Heart left ventricle (tissue), 16 donors: ENCODE measurements at regions of chr20 and their contacts with region 1.

Region 1: DNA sequence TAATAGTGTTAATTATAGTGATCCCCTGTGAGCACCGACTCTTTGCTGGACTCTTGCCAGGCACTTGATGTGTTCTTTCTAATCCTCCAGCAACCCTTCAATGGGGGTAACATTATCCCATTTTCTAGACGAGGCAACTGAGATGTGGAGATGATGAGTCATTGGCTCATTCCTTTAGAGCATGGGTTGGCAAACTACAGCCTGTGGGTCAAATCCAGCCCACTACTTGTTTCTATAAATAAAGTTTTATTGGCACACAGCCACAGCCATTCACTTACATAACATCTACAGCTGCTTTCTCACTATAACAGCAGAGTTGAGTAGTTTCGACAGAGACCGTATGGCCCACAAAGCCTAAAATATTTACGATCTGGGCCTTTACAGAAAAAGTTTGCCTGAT is 249.5 kb upstream of the KCNG1 start:
- DNase-seq: no peak
- ATAC-seq: no peak
- H3K4me3 ChIP-seq: no peak overlapping the region
- H3K27ac ChIP-seq: no peak overlapping the region
- H3K4me1 ChIP-seq: peaks cover 0 to 7% (median 0%) of the 10 kb centered on the region in 12 donors
- H3K27me3 ChIP-seq: peaks cover 1 to 43% (median 10%) of the 10 kb centered on the region in 9 donors
- CTCF ChIP-seq: no peak
- POLR2A ChIP-seq: no peak

Region 2: DNA sequence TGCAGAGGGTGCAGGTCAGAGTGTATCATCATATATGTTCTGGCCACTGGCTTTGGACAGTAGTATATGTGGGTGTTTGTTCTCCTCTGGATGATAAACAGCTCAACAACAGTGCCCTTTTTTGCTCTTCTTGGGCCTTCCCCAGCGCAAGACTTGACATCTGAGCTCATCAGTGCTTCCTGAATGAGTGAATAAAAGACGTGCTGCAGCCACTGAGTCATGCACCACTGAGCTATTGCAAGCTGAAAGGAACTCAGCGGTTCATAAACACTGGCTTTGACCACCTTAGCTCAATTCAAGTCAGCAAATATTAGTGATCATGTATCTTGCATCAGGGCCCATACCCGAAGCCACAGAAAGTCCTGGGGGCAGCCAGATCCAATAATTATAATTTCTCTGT is 144.2 kb before region 1 on chr20:
- intact Hi-C with region 1: no loop called
- DNase-seq: no peak
- ATAC-seq: no peak
- H3K4me3 ChIP-seq: no peak overlapping the region
- H3K27ac ChIP-seq: no peak overlapping the region
- H3K4me1 ChIP-seq: no peaks in the 10 kb centered on the region
- H3K27me3 ChIP-seq: peaks cover 0 to 9% (median 0%) of the 10 kb centered on the region in 9 donors
- CTCF ChIP-seq: no peak
- POLR2A ChIP-seq: no peak

Region 3: GRCh38 chr20:51156041-51156982 is 116.1 kb before region 1 on chr20:
- intact Hi-C with region 1: no loop called
- DNase-seq: no peak
- ATAC-seq: peak in 2 of 4 donors; percentile 43 to 59
- H3K4me3 ChIP-seq: no peak overlapping the region
- H3K27ac ChIP-seq: no peak overlapping the region
- H3K4me1 ChIP-seq: peaks cover 0 to 9% (median 0%) of the 10 kb centered on the region in 12 donors
- H3K27me3 ChIP-seq: peaks cover 0 to 56% (median 20%) of the 10 kb centered on the region in 9 donors
- CTCF ChIP-seq: no peak
- POLR2A ChIP-seq: no peak

Region 4: GRCh38 chr20:51184289-51184688 is 88.1 kb before region 1 on chr20:
- intact Hi-C with region 1: no loop called
- DNase-seq: no peak
- ATAC-seq: no peak
- H3K4me3 ChIP-seq: no peak overlapping the region
- H3K27ac ChIP-seq: no peak overlapping the region
- H3K4me1 ChIP-seq: no peaks in the 10 kb centered on the region
- H3K27me3 ChIP-seq: peaks cover 0 to 38% (median 3%) of the 10 kb centered on the region in 9 donors
- CTCF ChIP-seq: no peak
- POLR2A ChIP-seq: no peak

Region 5: DNA sequence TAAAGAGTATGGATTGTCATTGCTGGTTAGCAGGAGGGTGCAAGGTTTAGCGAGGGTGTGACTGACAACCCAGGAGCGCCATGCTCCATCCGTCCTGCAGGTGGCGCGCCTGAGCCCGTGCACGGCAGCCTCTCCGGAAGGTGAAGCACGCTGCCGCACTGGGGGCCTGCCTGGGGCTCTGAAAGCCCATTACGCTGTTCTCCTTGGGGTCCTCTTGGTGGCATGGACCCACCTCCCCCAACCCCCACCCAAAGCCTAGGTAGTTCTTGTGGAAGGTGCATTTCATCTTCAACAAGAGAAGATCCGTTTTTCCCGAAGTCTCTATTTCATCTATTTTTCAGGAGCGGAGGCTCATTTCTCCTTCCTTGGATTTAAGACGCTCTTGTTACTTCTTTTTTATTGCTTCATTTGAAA is 52.1 kb before region 1 on chr20:
- intact Hi-C with region 1: loop called in 1 of 10 experiments (anchors 10 kb)
- DNase-seq: peak in 2 of 5 donors; percentile 22 to 34
- ATAC-seq: peak in 1 of 4 donors; percentile 44
- H3K4me3 ChIP-seq: no peak overlapping the region
- H3K27ac ChIP-seq: no peak overlapping the region
- H3K4me1 ChIP-seq: peaks cover 0 to 3% (median 0%) of the 10 kb centered on the region in 12 donors
- H3K27me3 ChIP-seq: peaks cover 0 to 61% (median 33%) of the 10 kb centered on the region in 9 donors
- CTCF ChIP-seq: peak; percentile 57 to 88 (median 74)
- POLR2A ChIP-seq: no peak